Left ventricle myocardium superior (tissue), 1 donor: ENCODE measurements at regions of chr6 and their contacts with region 1.

Region 1: GRCh38 chr6:43143235-43144124 is 27.6 kb upstream of the SRF start:
- DNase-seq: peak; percentile 93
- ATAC-seq: peak; percentile 97

Region 2: GRCh38 chr6:42505377-42505702 is 638.1 kb before region 1 on chr6:
- intact Hi-C with region 1: no loop called
- DNase-seq: no peak
- ATAC-seq: no peak

Region 3: DNA sequence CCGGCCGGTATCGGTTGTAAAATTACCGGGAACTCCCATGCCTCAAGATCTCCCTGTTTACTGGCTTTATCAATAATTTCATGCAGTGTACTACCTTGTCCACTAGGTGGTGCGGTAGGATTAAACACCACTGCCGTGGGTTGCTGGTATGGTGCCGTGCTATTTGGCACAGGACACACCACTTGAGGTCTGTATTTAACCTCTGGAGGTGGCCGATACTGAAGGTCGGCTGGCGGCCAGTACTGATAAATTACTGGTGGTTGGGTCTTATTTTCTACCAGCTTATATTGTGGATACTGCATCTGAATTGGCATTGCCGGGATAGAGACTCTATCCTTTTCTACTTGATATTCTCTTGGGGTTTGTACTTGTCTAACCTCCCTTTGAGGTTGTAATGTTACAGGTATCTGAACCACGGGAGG is 241.9 kb before region 1 on chr6:
- intact Hi-C with region 1: loop called (anchors 5 kb)
- DNase-seq: peak; percentile 84
- ATAC-seq: peak; percentile 98

Region 4: DNA sequence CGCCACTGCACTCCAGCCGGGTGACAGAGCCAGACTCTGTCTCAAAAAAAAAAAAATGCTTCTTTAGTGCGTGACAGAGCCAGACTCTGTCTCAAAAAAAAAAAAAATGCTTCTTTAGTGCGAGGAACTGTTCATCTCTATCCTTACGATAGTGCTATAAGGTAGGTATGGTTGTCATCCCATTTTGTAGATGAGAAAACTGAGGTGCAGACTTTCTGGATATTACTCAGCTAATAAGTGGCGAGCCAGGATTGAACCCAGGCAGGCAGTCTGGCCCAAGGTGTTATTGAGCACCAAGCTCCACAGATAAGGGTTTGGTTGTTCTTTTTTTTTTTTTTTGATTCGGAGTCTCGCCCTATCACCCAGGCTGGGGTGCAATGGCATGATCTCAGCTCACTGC is 141.6 kb before region 1 on chr6:
- intact Hi-C with region 1: loop called (anchors 5 kb)
- DNase-seq: no peak
- ATAC-seq: no peak